CD8-positive, alpha-beta T cell (primary cell): ENCODE measurements at regions of chr19 and their contacts with region 1.

Region 1: GRCh38 chr19:54448774-54449700 is at the start of gene LENG8:
- DNase-seq: peak; percentile 94 to 100 (median 97)
- ATAC-seq: peak; percentile 89
- H3K4me3 ChIP-seq: peak within 1 kb of the TSS; percentile 66 to 67
- H3K4me3 Mint-ChIP-seq: peak within 1 kb of the TSS; percentile 99
- H3K27ac ChIP-seq: peak within 1 kb of the TSS; percentile 97 to 98
- H3K27ac Mint-ChIP-seq: peak within 1 kb of the TSS; percentile 99
- H3K4me1 ChIP-seq: peaks cover 39% of the 10 kb centered on the region
- H3K4me1 Mint-ChIP-seq: peaks cover 52% of the 10 kb centered on the region
- H3K27me3 ChIP-seq: no peaks in the 10 kb centered on the region
- H3K27me3 Mint-ChIP-seq: no peaks in the 10 kb centered on the region
- CTCF ChIP-seq: no peak
- total RNA-seq, gene LENG8: 514 to 558 TPM

Region 2: GRCh38 chr19:54463531-54464043 is 14.6 kb after region 1 on chr19 and contains the start of gene LENG9:
- CTCF ChIA-PET with region 1: interaction called, 3 read pairs
- POLR2A ChIA-PET with region 1: interaction called, 16 read pairs
- intact Hi-C with region 1: loop called (anchors 1 kb)
- DNase-seq: peak; percentile 81 to 100 (median 91)
- ATAC-seq: peak; percentile 70
- H3K4me3 ChIP-seq: peak within 1 kb of the TSS; percentile 79 to 83
- H3K4me3 Mint-ChIP-seq: peak within 1 kb of the TSS; percentile 86
- H3K27ac ChIP-seq: peak within 1 kb of the TSS; percentile 81 to 84
- H3K27ac Mint-ChIP-seq: peak within 1 kb of the TSS; percentile 93
- H3K4me1 ChIP-seq: peaks cover 20% of the 10 kb centered on the region
- H3K4me1 Mint-ChIP-seq: peaks cover 36% of the 10 kb centered on the region
- H3K27me3 ChIP-seq: no peaks in the 10 kb centered on the region
- H3K27me3 Mint-ChIP-seq: no peaks in the 10 kb centered on the region
- CTCF ChIP-seq: no peak
- total RNA-seq, gene LENG9: 2.3 to 2.7 TPM